Activated naive CD4-positive, alpha-beta T cell treated with anti-CD3 and anti-CD28 coated beads for 36 hours (primary cell): ENCODE measurements at regions of chr3 and their contacts with region 1.

Region 1: DNA sequence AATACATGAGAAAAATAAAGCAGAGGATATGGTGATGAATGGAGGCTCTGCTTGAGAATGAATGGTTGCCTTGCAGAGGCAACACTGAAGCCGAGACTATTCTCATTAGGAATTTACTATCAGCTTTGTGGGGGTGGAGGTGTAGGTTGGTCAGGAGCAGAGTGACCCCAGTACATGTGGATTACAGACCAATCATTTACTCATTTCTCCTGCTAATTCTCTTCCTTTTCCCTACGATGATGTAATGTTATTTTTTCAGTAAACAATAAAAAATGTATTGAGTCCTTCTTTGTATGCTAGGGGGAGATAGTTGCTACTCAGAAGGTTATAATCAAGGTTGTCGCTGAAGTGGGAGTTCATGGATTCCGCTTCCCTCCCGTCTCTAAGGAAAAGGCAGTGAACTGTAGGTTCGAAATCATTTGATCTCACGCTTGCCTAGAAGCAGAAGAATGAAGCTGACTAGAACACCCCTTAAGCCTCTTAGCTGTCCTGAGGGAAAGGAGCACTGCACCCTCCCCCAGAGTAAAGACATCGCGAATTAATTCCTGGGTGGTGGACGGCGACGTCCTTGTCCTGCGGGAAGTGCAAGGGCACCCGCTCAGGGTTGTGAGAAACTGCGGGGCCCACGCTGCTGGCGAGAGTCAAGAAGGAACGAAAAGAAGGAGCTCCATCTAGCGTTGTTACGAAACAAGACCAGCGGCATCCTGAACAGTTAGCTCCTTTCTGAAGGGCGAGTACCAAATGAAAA is 213.2 kb upstream of the PFN2 start:
- DNase-seq: peak; percentile 62
- H3K4me3 Mint-ChIP-seq: no peak overlapping the region
- H3K27ac Mint-ChIP-seq: no peak overlapping the region
- H3K4me1 Mint-ChIP-seq: no peaks in the 10 kb centered on the region
- H3K27me3 Mint-ChIP-seq: peaks cover 11% of the 10 kb centered on the region

Region 2: GRCh38 chr3:149512209-149512782 is 671.6 kb before region 1 on chr3:
- CTCF ChIA-PET with region 1: no interaction called
- intact Hi-C with region 1: loop called (anchors 10 kb)
- DNase-seq: peak; percentile 59
- H3K4me3 Mint-ChIP-seq: no peak overlapping the region
- H3K27ac Mint-ChIP-seq: no peak overlapping the region
- H3K4me1 Mint-ChIP-seq: peaks cover 14% of the 10 kb centered on the region
- H3K27me3 Mint-ChIP-seq: peaks cover 15% of the 10 kb centered on the region

Region 3: GRCh38 chr3:149765762-149766334 is 418.0 kb before region 1 on chr3:
- CTCF ChIA-PET with region 1: no interaction called
- intact Hi-C with region 1: loop called (anchors 1 kb)
- DNase-seq: no peak
- H3K4me3 Mint-ChIP-seq: no peak overlapping the region
- H3K27ac Mint-ChIP-seq: no peak overlapping the region
- H3K4me1 Mint-ChIP-seq: no peaks in the 10 kb centered on the region
- H3K27me3 Mint-ChIP-seq: peaks cover 19% of the 10 kb centered on the region

Region 4: DNA sequence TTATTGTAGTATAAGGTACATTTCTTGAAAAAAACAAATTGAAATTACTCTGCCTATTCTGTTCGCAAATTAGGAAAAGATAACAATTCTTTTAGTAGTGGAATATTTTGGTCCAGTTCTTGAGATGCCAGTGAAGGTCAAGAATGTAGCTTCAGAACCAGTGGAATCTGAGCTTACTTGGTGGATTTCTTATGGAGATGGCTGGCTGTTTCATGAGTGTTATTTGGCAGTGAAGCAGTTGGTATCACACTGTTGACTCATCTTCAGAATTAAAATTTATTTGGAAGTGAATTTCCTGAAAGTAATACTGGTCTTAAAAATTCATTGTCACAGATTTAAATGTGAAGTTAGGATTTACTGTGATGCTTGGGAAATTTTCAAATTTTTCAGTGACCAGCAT is 351.8 kb before region 1 on chr3:
- CTCF ChIA-PET with region 1: no interaction called
- intact Hi-C with region 1: no loop called
- DNase-seq: no peak
- H3K4me3 Mint-ChIP-seq: no peak overlapping the region
- H3K27ac Mint-ChIP-seq: no peak overlapping the region
- H3K4me1 Mint-ChIP-seq: peaks cover 3% of the 10 kb centered on the region
- H3K27me3 Mint-ChIP-seq: no peaks in the 10 kb centered on the region

Region 5: DNA sequence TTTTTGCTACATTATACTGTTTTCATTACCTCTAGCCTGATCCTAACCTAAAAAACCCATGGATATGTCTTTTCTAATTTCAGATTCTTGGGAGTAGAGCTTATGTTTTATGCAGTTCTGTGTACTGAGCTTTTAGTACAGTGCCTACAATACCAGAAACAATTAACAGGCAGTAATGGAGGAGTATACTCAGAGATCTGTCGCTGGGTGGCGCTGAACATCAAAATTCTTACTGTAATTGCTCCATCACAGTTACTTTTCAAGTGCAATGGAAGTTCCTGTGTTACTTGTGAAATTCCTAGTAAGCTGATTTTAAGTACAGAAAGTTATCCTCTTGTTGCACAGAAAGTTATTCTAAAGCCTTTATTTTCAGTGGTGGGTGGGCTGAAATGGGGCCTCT is 304.0 kb before region 1 on chr3:
- CTCF ChIA-PET with region 1: no interaction called
- intact Hi-C with region 1: loop called (anchors 1 kb)
- DNase-seq: peak; percentile 61
- H3K4me3 Mint-ChIP-seq: no peak overlapping the region
- H3K27ac Mint-ChIP-seq: no peak overlapping the region
- H3K4me1 Mint-ChIP-seq: peaks cover 4% of the 10 kb centered on the region
- H3K27me3 Mint-ChIP-seq: no peaks in the 10 kb centered on the region

Region 6: GRCh38 chr3:149936812-149937233 is 247.0 kb before region 1 on chr3:
- CTCF ChIA-PET with region 1: interaction called, 9 read pairs
- intact Hi-C with region 1: loop called (anchors 1 kb)
- DNase-seq: peak; percentile 53
- H3K4me3 Mint-ChIP-seq: no peak overlapping the region
- H3K27ac Mint-ChIP-seq: no peak overlapping the region
- H3K4me1 Mint-ChIP-seq: peaks cover 6% of the 10 kb centered on the region
- H3K27me3 Mint-ChIP-seq: no peaks in the 10 kb centered on the region